ENCODE measurements at regions of chr6 and their contacts with region 1.

Region 1: DNA sequence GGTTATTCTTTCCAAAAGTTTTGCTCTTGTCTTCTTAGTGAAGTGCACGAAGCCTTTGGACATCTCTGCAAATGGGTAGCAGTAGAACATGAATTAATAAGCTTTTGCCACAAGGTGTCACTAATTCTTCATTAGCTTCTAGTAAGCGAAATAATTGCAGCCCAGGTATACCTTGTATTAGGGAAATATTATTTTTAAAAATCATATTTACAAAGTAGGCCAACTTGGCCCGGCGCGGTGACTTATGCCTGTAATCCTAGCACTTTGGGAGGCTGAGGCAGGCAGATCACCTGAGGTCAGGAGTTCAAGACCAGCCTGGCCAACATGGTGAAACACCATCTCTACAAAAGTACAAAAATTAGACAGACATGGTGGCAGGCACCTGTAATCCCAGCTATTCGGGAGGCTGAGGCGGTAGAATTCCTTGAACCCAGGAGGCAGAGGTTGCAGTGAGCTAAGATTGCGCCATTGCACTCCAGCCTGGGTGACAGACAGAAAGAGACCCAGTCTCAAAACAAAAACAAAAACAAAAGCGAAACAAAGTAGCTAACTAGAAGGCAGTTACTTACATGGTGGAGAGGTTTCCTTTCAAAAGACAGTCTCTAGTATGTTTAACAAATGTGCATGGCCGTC is 8.8 kb upstream of the RSPH3 start:
- DNase-seq: peak in 3 of 10 donors; percentile 56 to 64 (median 59)
- ATAC-seq: peak; percentile 47 to 82
- H3K4me3 Mint-ChIP-seq: peak overlapping the region in 2 of 10 donors; percentile 36 to 73
- H3K27ac Mint-ChIP-seq: peak overlapping the region in 2 of 10 donors; percentile 42 to 76
- H3K4me1 Mint-ChIP-seq: peaks cover 6 to 31% (median 20%) of the 10 kb centered on the region in 4 donors
- H3K27me3 Mint-ChIP-seq: no peaks in the 10 kb centered on the region

Region 2: GRCh38 chr6:159134701-159135364 is 126.1 kb after region 1 on chr6:
- POLR2A ChIA-PET with region 1: interaction called, 10 read pairs
- DNase-seq: peak; percentile 44 to 81 (median 72)
- ATAC-seq: peak; percentile 81 to 96
- H3K4me3 Mint-ChIP-seq: peak overlapping the region in 1 of 10 donors; percentile 28
- H3K27ac Mint-ChIP-seq: no peak overlapping the region
- H3K4me1 Mint-ChIP-seq: peaks cover 0 to 17% (median 2%) of the 10 kb centered on the region in 4 donors
- H3K27me3 Mint-ChIP-seq: peaks cover 0 to 12% (median 5%) of the 10 kb centered on the region in 5 donors

Region 3: DNA sequence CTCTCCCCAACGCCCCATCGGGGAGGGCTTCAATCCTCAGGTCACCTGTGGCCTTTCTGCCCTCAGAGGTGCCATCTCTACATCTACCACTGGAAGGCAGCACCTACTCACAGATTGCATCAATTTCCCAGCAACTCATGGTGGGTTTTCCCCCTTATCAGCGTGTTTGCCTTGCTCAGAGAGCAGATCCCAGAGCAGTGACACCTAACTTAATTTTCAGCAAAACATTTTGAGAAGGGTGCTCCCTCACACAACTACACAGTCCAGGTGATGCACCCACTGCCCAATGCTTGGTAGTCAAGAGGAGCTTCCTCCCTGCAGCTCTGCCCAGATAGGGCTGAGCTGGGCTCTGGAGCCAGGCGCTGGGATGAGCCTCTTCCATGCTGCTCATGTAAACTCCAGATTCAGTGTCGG is 1741.5 kb after region 1 on chr6:
- POLR2A ChIA-PET with region 1: no interaction called
- DNase-seq: no peak
- ATAC-seq: no peak
- H3K4me3 Mint-ChIP-seq: no peak overlapping the region
- H3K27ac Mint-ChIP-seq: no peak overlapping the region
- H3K4me1 Mint-ChIP-seq: no peaks in the 10 kb centered on the region
- H3K27me3 Mint-ChIP-seq: peaks cover 6 to 29% (median 15%) of the 10 kb centered on the region in 5 donors